ENCODE measurements at regions of chr12 and their contacts with region 1.

Region 1: GRCh38 chr12:7108796-7109571 is at the start of gene C1RL:
- DNase-seq: peak; percentile 74
- H3K4me3 ChIP-seq: peak within 1 kb of the TSS; percentile 23 to 64 (median 39)
- H3K27ac ChIP-seq: peak within 1 kb of the TSS; percentile 61
- H3K4me1 ChIP-seq: peaks cover 8% of the 10 kb centered on the region
- H3K27me3 ChIP-seq: no peaks in the 10 kb centered on the region
- CTCF ChIP-seq: peak; percentile 97 to 98
- POLR2A ChIP-seq: no peak
- total RNA-seq, gene C1RL: 22.5 and 25.0 TPM in 2 replicates

Region 2: DNA sequence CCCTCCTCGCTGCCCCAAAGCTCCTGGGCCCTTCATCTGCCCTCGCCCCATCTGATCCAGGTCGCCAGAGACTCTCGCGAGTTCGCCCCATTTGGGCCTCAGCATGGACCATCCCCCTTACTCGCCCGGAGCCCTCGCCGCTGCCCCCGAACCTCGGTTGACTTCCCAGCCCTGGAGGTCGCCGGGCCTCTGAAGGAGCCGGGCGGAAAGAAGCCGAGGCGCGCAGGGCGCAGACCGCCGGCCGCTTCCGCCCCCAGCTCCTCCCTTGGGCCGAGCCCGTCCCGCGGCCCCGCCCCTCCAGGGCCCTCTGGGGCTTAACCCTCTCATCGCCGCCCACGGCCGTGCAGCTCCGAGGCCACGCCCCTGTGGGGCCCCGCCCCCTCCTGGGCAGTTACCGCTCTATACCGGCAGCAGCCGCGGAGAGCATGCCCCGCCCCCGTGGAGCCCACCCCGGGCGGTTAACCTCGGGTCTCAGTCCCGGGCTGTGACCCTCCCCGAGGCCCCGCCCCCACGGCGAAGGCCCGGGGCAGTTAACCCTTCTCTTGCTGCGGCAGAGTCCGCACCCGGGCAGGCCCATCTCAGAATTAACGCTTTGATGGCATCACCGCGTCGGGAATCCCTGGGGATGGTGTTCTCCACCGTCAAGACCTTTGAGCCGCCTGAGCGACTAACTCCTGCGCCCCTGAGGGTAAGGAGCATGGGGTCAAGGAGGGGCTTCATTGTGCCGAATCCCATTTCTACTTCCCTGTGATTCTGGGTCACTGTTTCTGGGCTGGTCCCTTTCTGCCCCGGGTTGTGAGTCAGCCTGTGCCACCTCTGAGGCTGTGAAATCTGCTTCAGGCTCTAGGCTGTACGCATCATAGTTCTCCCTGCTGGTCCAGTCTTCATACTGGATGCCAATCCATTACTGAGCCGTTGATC is 235.6 kb before region 1 on chr12 and contains the start of gene SPSB2:
- CTCF ChIA-PET with region 1: interaction called, 21 read pairs
- POLR2A ChIA-PET with region 1: no interaction called
- dilution Hi-C with region 1: no loop called
- intact Hi-C with region 1: loop called (anchors 5 kb)
- DNase-seq: peak; percentile 96
- H3K4me3 ChIP-seq: peak within 1 kb of the TSS; percentile 59 to 92 (median 84)
- H3K27ac ChIP-seq: peak within 1 kb of the TSS; percentile 60
- H3K4me1 ChIP-seq: peaks cover 34% of the 10 kb centered on the region
- H3K27me3 ChIP-seq: no peaks in the 10 kb centered on the region
- CTCF ChIP-seq: no peak
- POLR2A ChIP-seq: peak; percentile 91
- total RNA-seq, gene SPSB2: 3.9 and 6.9 TPM in 2 replicates

Region 3: DNA sequence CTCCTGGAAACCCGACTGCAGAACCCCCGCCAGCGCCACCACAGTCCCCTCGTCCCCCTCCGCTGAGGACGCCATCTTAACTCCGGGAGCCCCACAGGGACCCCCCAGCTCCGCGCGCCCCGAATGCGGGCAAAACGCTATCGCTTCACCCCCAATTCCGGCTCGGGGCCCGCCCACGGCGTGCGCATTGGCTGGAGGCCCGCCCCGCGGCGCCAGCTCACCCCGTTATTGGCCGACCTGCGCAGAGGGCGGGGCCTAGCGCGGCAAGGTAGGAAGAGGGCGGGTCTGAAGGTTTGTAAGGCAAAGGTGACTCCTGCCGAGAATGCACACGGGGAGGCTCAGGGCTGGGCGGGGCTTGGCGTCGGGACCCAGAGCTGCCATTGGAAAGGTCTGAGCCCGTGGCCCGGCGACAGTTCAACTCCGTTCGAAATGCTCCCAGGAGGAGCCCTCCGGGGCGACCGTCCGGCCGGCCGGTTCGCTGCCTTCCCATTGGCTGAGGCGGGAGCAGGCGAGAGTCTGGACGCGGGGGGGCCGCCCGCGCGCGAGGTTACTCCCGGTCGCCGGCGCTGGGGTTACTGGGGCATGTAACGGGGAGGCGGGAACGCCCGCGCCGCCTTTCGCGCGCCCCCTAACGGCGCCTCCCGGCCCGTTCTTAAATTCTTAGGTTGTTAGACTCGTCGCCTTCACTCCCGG is 90.5 kb before region 1 on chr12 and contains the start of gene LPCAT3:
- CTCF ChIA-PET with region 1: interaction called, 6 read pairs
- POLR2A ChIA-PET with region 1: no interaction called
- dilution Hi-C with region 1: no loop called
- intact Hi-C with region 1: loop called (anchors 2 kb)
- DNase-seq: peak; percentile 97
- H3K4me3 ChIP-seq: peak within 1 kb of the TSS; percentile 79 to 98 (median 97)
- H3K27ac ChIP-seq: peak within 1 kb of the TSS; percentile 64
- H3K4me1 ChIP-seq: peaks cover 10% of the 10 kb centered on the region
- H3K27me3 ChIP-seq: no peaks in the 10 kb centered on the region
- CTCF ChIP-seq: peak; percentile 88 to 94
- POLR2A ChIP-seq: peak; percentile 49
- total RNA-seq, gene LPCAT3: 29.3 and 29.5 TPM in 2 replicates

Region 4: GRCh38 chr12:7092229-7092985 is 16.6 kb before region 1 on chr12 and contains the start of gene C1R:
- CTCF ChIA-PET with region 1: interaction called, 11 read pairs
- POLR2A ChIA-PET with region 1: no interaction called
- dilution Hi-C with region 1: no loop called
- intact Hi-C with region 1: loop called (anchors 2 kb)
- DNase-seq: peak; percentile 67
- H3K4me3 ChIP-seq: peak within 1 kb of the TSS; percentile 51 to 70 (median 64)
- H3K27ac ChIP-seq: no peak within 1 kb of the TSS
- H3K4me1 ChIP-seq: peaks cover 6% of the 10 kb centered on the region
- H3K27me3 ChIP-seq: peaks cover 0 to 16% of the 10 kb centered on the region in 2 experiments
- CTCF ChIP-seq: peak; percentile 85
- POLR2A ChIP-seq: no peak
- total RNA-seq, gene C1R: 3.1 and 3.6 TPM in 2 replicates

Region 5: DNA sequence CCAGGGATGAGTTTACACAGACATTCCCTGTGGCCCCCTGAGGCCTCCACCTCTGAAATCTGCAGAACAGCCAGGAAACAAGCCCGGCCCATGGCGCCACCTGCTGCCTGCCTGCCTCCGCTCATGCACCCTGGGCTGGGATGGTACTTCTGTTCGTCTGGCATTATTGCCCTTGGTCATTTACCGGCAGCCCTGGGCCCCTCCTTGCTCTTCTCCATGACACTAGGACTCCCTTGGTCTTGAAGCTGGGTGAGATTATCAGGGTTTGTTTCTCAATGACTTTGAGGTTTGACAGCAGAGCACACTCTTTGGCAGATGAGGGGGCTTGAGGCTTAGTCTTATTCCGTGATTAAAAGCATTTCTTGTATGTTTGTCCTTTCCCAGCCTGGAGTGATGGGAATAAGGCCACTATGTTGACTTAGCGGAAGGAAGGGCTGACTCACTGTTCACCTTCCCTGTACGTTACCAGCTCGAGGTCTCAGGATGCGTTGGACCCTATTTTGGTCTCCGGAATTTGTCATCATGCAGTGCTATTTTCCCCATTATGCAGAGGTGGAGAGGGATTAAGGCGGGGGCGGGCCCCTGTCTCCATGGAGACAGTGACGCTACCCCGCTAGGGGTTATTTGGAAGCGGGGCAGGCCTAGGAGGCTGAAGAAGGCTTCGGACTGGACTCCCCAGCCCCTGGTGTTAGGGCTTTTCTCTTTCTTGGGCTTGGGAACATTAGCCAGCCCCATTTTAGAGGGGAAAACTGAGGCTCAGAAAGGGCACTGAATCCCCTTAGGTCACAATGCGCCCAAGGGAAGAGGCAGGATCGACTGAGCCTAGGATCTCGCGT is 79.8 kb after region 1 on chr12:
- CTCF ChIA-PET with region 1: no interaction called
- POLR2A ChIA-PET with region 1: no interaction called
- dilution Hi-C with region 1: no loop called
- intact Hi-C with region 1: loop called (anchors 1 kb)
- DNase-seq: peak; percentile 95
- H3K4me3 ChIP-seq: peak overlapping the region in 2 of 3 experiments; percentile 64 to 69
- H3K27ac ChIP-seq: peak overlapping the region; percentile 98
- H3K4me1 ChIP-seq: peaks cover 22% of the 10 kb centered on the region
- H3K27me3 ChIP-seq: no peaks in the 10 kb centered on the region
- CTCF ChIP-seq: peak; percentile 87 to 88
- POLR2A ChIP-seq: no peak

Measured in endothelial cell of umbilical vein (primary cell).